ENCODE measurements at regions of chrX and their contacts with region 1.

Region 1: DNA sequence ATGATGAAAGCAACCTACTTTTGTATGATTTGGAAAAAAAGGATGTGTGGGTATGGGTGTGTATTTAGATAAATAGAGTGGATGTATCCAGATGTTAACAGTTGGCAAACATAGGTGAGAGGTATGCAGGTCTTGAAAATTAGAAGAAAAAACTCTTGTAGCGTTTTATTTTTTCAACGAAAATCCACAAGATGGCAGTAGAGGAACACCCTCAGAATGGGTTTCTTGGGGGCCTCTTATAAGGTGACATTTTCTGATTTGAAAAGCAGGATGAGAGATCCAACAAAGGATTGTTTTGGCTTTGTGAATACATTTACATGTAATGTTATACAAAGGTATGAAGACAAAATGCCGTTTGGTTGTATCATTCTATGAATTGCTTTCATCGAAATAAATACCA is 68.3 kb downstream of the FMR1NB start:
- DNase-seq: peak; percentile 1
- H3K4me3 Mint-ChIP-seq: no peak overlapping the region
- H3K27ac Mint-ChIP-seq: no peak overlapping the region
- H3K4me1 Mint-ChIP-seq: no peaks in the 10 kb centered on the region
- H3K27me3 Mint-ChIP-seq: no peaks in the 10 kb centered on the region
- CTCF ChIP-seq: no peak

Region 2: GRCh38 chrX:148270499-148270898 is 221.1 kb after region 1 on chrX:
- CTCF ChIA-PET with region 1: no interaction called
- intact Hi-C with region 1: no loop called
- DNase-seq: no peak
- H3K4me3 Mint-ChIP-seq: no peak overlapping the region
- H3K27ac Mint-ChIP-seq: no peak overlapping the region
- H3K4me1 Mint-ChIP-seq: no peaks in the 10 kb centered on the region
- H3K27me3 Mint-ChIP-seq: no peaks in the 10 kb centered on the region
- CTCF ChIP-seq: no peak

Region 3: GRCh38 chrX:149472625-149473024 is 1423.2 kb after region 1 on chrX:
- CTCF ChIA-PET with region 1: no interaction called
- intact Hi-C with region 1: loop called (anchors 1 kb)
- DNase-seq: no peak
- H3K4me3 Mint-ChIP-seq: no peak overlapping the region
- H3K27ac Mint-ChIP-seq: no peak overlapping the region
- H3K4me1 Mint-ChIP-seq: no peaks in the 10 kb centered on the region
- H3K27me3 Mint-ChIP-seq: no peaks in the 10 kb centered on the region
- CTCF ChIP-seq: no peak